ENCODE measurements at regions of chr13 and their contacts with region 1.

Region 1: DNA sequence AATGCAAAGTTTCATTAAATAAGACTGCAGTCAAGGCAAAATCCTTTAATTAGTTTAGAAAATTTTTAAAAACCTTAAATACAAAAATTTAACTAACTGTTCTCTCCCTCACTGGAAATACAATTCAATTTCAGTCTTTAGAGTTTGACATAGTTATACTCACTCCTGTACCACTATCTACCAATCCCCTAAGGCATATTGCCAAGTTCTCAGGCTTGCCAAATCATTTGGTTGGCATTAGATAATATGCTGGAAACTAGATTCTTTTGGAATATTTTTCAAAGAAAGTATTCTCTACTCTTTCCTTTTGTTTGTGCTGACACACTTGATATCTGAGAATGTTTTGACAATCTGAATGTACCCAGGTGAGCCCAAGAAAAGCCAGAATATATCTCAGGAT is 77.2 kb downstream of the TSC22D1 start:
- DNase-seq: peak in 2 of 6 donors; percentile 24 to 41
- ATAC-seq: peak; percentile 56 to 79 (median 71)
- H3K4me3 ChIP-seq: no peak overlapping the region
- H3K27ac ChIP-seq: no peak overlapping the region
- H3K4me1 ChIP-seq: peaks cover 0 to 17% (median 15%) of the 10 kb centered on the region in 3 donors
- H3K27me3 ChIP-seq: no peaks in the 10 kb centered on the region
- CTCF ChIP-seq: no peak

Region 2: DNA sequence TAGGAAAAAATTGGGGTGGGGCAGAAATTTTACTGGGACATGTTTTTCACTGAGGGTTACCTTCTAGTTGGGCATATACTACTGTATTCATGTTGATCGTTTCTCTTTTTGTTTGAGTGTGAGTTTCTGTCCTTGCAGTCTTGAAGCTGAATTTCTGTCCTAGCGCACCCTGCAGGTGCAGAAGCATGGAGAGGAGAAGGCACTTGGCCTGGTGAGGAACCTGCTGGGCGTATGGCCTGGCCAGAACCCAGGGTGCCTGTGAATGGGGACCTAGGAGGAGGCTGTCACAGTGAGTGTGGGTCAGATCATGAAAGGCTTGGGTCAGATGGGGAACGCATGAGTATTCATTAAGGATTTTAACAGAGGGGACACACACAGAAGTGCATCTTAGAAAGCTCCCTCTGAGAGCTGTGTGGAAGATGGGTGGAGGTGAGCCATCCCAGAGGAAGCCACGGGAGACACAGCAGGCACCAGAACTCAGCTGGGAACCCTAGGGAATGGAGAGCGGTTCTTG is 88.6 kb before region 1 on chr13:
- intact Hi-C with region 1: no loop called
- DNase-seq: no peak
- ATAC-seq: peak in 1 of 4 donors; percentile 36
- H3K4me3 ChIP-seq: no peak overlapping the region
- H3K27ac ChIP-seq: no peak overlapping the region
- H3K4me1 ChIP-seq: no peaks in the 10 kb centered on the region
- H3K27me3 ChIP-seq: no peaks in the 10 kb centered on the region
- CTCF ChIP-seq: no peak

Region 3: DNA sequence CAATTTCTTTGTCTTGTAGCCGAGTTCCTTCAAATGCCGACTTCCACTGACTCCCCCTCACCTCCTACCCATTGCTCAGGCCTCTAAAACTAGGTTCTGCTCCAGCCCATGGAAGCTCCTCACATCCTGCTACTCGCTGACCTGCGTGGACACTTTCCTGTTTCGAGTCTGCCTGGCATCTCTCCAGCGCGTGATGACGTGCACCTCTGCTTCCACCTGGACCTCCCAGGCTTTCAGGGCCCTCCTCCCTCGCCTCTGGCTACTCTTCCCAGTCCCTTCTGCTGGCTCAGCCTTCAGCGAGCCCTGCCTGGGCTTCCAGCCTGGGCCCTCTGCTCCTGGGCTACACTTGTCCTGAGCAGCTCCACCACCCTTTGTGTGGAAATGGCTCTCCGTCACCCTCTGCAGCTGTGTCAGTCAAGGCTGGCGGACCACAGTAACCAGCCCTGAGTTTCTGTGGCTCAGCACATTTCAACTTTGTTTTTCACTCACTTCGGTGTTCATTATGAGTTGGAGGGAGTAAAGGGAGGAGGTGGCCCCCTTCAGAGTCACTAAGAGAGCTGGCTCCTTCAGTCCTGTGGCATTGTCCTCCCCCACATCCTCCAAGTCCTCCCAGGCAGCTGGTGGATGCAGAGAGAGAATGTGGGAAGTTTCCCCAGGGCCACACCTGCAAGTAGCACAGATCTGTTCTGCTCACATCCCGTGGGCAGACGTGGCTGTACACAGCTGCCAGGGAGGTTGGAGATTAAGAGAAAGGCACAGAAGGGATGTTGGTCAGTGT is 76.0 kb before region 1 on chr13:
- intact Hi-C with region 1: no loop called
- DNase-seq: peak in 1 of 6 donors; percentile 28
- ATAC-seq: peak; percentile 22 to 58 (median 26)
- H3K4me3 ChIP-seq: no peak overlapping the region
- H3K27ac ChIP-seq: no peak overlapping the region
- H3K4me1 ChIP-seq: no peaks in the 10 kb centered on the region
- H3K27me3 ChIP-seq: no peaks in the 10 kb centered on the region
- CTCF ChIP-seq: no peak

Region 4: DNA sequence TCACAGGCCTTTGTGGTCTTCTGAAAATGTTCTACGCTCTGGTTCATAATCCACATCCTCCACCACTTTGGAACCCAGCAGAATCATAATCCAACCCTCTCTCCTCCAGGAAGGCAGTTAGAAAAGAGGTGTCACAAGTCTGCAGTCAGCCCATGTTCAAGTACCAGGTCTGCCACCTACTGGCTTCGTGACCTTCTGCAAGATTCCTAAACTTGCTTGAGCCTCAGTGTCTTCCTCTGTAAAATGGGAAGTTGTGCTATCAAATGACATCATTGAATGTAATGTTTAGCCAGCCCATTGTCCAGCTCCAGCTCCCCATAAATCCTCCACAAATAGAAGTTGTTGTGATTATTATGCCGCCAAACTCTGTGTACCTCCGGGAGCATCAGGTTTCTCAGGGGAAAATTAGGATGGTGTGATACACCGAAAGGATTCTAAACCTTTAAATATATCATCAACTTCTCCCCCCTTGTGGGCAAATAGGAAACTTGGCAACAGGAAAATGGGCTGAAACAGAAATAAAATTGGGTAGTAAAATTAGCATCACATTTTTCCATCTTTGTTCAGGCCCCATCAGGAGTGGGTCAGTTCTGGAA is 380.6 kb after region 1 on chr13:
- intact Hi-C with region 1: loop called in 1 of 3 experiments (anchors 10 kb)
- DNase-seq: peak in 2 of 6 donors; percentile 40 to 56
- ATAC-seq: peak; percentile 80 to 92 (median 85)
- H3K4me3 ChIP-seq: no peak overlapping the region
- H3K27ac ChIP-seq: no peak overlapping the region
- H3K4me1 ChIP-seq: no peaks in the 10 kb centered on the region
- H3K27me3 ChIP-seq: no peaks in the 10 kb centered on the region
- CTCF ChIP-seq: peak in 3 of 4 donors; percentile 27 to 41 (median 38)

Region 5: DNA sequence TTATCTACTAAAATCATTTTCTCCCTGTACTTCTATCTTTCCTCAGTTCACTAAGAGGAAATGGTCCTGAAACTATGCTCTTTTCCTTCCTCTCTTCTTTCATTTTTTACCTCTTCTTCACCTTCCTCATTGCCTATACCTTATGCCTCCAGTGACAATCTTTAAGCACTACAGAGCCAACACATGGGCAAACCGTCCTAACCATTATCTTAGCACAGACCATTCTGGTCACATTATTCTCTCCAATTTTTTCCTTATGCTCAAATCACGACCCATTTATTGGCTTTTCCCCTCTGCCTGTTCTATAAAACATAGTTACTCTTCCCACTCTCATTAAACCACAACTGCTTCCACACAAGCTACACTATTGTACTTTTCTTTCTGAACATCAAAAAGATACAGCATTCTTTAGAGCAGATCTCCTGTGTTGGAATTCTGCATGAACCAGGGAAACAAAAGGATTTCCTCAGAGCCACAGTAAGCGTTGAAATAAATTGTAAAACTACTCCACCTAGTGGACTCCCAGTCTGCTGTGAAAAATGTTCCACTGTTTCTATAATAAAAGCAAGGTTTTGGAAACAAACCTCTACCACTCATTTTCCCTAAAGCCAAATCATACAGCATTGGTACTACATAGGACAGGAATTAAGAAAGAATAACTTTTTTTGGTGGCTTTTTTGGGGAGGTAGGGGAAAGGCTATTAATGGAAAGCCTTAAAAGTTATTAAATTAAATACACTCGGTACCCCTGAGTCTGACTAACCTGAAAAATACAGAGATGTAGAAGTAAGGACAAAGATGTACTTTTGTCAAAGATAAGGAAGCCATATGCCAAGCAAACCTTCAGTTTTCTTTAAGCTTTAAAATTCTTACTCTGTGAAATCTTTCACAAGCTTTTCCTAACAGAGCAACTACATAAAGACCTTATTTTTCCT is 470.8 kb after region 1 on chr13:
- intact Hi-C with region 1: loop called in 1 of 3 experiments (anchors 10 kb)
- DNase-seq: no peak
- ATAC-seq: peak; percentile 72 to 84 (median 80)
- H3K4me3 ChIP-seq: no peak overlapping the region
- H3K27ac ChIP-seq: no peak overlapping the region
- H3K4me1 ChIP-seq: peaks cover 0 to 14% (median 10%) of the 10 kb centered on the region in 3 donors
- H3K27me3 ChIP-seq: no peaks in the 10 kb centered on the region
- CTCF ChIP-seq: peak; percentile 49 to 72 (median 58)

Region 6: DNA sequence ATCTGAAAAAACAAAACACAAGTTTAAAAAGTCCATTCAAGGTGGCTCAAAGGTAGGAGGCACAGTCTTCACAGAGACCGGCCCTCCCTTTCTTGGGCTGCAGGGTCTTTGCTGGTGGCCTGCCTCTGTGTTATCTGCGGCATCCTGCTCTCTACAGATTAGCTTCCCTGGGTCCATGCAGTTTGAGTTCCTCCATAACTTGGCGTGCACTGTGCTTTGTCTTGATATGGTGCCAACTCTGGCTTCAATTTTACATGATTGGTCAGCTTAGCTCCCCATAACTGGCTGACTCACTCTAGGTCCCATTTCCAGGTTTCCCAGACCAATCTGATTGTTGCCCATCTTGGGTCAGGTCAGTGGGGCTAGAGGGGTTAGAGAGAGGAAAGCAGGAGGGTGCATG is 800.2 kb after region 1 on chr13:
- intact Hi-C with region 1: no loop called
- DNase-seq: no peak
- ATAC-seq: peak in 1 of 4 donors; percentile 27
- H3K4me3 ChIP-seq: no peak overlapping the region
- H3K27ac ChIP-seq: no peak overlapping the region
- H3K4me1 ChIP-seq: no peaks in the 10 kb centered on the region
- H3K27me3 ChIP-seq: peaks cover 0 to 8% (median 0%) of the 10 kb centered on the region in 4 donors
- CTCF ChIP-seq: no peak

Measured in pancreas (tissue), 10 donors.